ENCODE measurements at regions of chr2 and their contacts with region 1.

Region 1: DNA sequence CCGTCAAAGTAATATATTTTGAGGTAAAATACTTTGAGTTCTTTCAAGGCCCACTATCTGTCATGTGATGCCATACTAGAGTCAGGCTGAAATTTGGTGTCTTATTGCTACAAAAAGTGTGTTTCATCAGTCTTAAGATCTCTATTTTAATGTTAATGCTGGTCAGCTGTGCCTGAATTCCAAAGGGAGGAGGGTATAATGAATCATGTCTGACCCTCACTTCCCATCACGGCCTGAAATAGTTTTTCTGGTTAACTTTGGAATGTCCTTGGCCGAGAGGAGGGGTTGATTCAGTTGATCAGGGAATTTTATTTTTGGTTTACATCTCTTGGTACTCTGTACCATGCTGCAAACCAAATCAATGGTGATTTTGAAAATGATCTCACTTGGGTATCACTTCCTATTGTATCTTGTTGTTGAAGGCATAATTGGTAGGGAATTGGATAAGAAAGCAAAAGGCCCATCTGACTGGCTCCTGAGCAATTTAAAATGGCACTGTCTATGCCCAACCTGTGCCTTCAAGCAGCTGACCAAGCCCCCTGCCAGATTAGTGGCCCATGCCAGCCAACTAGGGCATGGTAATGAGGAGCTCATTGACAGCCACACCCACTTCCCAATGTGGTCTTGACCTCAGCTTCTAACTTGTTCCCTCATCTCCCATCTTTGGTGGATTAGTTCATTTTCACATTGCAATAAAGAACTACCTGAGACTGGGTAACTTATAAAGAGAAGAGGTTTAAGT is 6.1 kb upstream of the SLC35F5 start:
- DNase-seq: no peak
- ATAC-seq: no peak
- H3K4me3 ChIP-seq: no peak overlapping the region
- H3K27ac ChIP-seq: no peak overlapping the region
- H3K4me1 ChIP-seq: peaks cover 0 to under 1% (median 0%) of the 10 kb centered on the region in 3 donors
- H3K27me3 ChIP-seq: no peaks in the 10 kb centered on the region
- CTCF ChIP-seq: no peak

Region 2: DNA sequence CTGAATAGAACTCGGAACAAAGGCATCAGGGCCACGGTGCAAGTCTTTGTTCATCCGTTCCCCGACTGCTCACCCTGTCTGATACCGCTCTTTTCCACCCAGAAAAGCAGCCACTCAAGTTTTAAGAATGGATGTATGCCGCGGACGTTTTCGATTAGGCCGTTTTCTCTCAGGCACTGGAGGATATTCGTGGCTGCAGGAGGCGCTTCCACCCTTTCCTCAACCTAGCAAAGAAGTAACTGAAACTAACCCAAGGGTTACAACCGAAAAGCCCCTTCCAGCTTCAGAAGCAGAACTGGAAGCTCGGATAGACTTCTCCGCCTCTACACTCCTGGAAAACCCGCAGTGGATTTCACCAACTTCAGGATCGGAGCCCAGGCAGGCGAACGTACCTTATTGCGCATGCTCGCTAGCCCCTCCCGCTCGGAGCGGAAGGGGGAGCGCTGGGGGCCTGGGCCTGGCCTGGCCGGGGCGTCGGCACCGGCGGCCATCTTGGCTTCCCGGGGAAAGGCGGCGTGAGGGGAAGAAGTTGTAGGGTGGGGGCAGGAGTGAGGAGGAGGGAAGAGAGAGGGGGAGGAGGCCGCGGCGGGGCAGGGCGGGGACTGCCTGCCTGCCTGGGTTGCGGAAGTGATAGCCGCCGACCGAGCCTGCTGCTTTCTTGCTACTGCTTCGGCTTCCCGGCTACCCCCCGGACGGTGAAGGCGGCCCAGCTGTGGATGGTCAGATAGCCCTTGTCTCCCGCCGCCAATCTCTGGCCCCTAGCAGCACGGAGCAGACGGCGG is 127.1 kb after region 1 on chr2 and contains the start of gene ACTR3:
- intact Hi-C with region 1: loop called in 1 of 3 experiments (anchors 10 kb)
- DNase-seq: peak; percentile 97 to 99 (median 98)
- ATAC-seq: peak; percentile 90 to 96 (median 95)
- H3K4me3 ChIP-seq: peak within 1 kb of the TSS; percentile 66 to 97 (median 94)
- H3K27ac ChIP-seq: peak within 1 kb of the TSS; percentile 88 to 100 (median 92)
- H3K4me1 ChIP-seq: peaks cover 21 to 45% (median 32%) of the 10 kb centered on the region in 3 donors
- H3K27me3 ChIP-seq: no peaks in the 10 kb centered on the region
- CTCF ChIP-seq: no peak
- total RNA-seq, gene ACTR3: 44.5 to 112 (median 72.7) TPM

Region 3: DNA sequence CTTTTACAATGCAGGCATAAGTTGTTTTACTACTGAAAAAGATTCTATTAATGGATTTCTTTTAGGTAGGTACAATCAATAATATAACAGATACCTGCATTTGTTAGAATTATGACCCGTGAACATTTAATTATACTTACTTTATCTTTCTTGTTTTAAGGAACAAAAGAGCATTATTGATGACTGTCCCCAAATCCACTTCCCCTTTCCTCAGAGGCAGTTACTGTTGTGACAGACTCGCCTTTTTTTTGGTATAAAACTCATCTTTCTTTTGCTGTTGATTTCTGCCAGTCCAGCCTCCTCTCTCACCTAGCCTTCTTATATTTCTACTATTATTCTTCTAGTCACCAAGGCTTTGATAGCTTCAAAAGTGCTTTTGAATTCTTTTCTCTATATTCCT is 139.4 kb after region 1 on chr2:
- intact Hi-C with region 1: no loop called
- DNase-seq: no peak
- ATAC-seq: no peak
- H3K4me3 ChIP-seq: no peak overlapping the region
- H3K27ac ChIP-seq: peak overlapping the region in 1 of 4 donors; percentile 25
- H3K4me1 ChIP-seq: peaks cover 7 to 52% (median 36%) of the 10 kb centered on the region in 3 donors
- H3K27me3 ChIP-seq: no peaks in the 10 kb centered on the region
- CTCF ChIP-seq: no peak

Measured in pancreas (tissue), 10 donors.